ENCODE measurements at regions of chr16 and their contacts with region 1.

Region 1: DNA sequence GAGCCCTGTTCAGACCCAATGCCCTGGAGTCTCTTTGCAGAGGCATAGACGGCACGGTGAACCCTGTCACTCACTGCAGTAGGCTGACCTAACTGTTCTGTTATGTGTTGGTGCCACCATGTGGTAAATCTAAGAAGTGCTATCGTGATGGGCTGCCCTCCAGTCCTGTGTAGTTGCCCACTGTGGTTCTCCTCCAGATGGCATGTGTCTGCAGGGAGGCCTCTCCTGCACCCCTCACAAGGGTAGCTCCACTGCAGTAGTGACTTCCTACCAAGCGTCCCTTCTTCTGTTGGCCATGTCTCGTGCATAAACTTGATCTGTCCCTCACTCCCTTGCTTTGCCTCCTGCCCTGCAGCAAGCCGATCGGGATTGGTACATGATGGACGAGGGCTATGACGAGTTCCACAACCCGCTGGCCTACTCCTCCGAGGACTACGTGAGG is 5.8 kb downstream of the DHX38 start:
- DNase-seq: peak in 5 of 10 donors; percentile 21 to 89 (median 31)

Region 2: DNA sequence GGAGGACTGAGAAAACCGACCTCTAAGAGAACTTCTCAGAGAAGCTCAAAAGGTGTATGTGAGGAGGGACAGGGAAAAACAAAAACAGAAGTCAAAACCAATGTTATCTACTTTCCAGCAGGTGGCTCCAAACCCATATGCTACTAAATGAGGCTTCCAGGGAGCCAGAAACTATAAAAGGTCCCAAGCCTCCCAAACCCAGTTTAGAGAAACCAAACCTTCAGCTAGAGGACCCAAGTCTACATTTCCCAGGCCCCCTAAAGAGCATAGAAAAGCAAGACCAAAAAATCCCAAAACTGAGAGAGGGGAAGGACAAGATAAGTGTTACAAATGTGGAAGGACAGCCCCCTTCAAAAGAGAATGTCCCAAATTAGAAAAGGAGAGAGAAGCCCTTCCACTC is 32.7 kb before region 1 on chr16:
- intact Hi-C with region 1: loop called (anchors 1 kb)
- DNase-seq: no peak

Measured in posterior cingulate gyrus (tissue), 11 donors.